HEK293 (cell line): ENCODE measurements at regions of chr1 and their contacts with region 1.

Region 1: GRCh38 chr1:202154766-202155477 is 5.5 kb downstream of the PTPN7 start:
- H3K4me3 ChIP-seq: no peak overlapping the region
- H3K27ac ChIP-seq: no peak overlapping the region
- H3K4me1 ChIP-seq: no peaks in the 10 kb centered on the region; the same call in 1 of the 2 replicates
- CTCF ChIP-seq: peak; percentile 56

Region 2: DNA sequence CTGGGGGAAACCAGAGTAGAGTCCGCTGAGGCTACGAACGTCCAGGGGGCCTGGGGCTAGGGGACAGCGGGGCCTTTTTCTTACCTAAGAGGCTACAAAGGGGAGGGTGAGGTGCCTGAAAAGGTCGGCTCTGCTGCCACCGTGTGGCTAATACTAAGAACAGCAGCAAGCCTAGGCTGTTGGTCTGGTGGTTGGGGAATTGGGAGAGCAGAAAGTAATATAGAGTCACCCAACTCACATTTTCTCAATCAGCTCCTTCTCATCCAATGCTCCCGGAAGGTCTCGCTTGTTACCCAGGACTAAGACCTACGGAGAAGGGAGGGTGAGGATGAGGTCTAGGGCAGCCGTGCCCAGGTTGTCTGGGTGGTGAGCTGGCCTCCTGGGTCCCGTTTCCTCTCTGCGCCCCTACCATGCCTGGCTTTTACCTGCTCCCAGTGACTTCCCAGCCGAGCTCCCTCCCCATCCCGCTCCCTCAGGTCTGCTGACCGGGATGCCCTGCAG is 19.7 kb before region 1 on chr1:
- CTCF ChIA-PET with region 1: interaction called, 20 read pairs
- POLR2A ChIA-PET with region 1: no interaction called
- H3K4me3 ChIP-seq: no peak overlapping the region
- H3K27ac ChIP-seq: no peak overlapping the region
- H3K4me1 ChIP-seq: no peaks in the 10 kb centered on the region
- CTCF ChIP-seq: 0 out of 2 replicates have a peak, but pooled peaks have one; percentile 39

Region 3: GRCh38 chr1:202144402-202145067 is 10.4 kb before region 1 on chr1 and contains the start of gene ARL8A:
- CTCF ChIA-PET with region 1: interaction called, 11 read pairs
- POLR2A ChIA-PET with region 1: interaction called, 8 read pairs
- H3K4me3 ChIP-seq: peak within 1 kb of the TSS; percentile 79
- H3K27ac ChIP-seq: peak within 1 kb of the TSS; percentile 90
- H3K4me1 ChIP-seq: no peaks in the 10 kb centered on the region; the same call in 1 of the 2 replicates
- CTCF ChIP-seq: no peak